Naive thymus-derived CD8-positive, alpha-beta T cell (primary cell): ENCODE measurements at regions of chr7 and their contacts with region 1.

Region 1: GRCh38 chr7:45111298-45112223 is at the start of gene TBRG4:
- DNase-seq: peak; percentile 90 to 96 (median 94)
- ATAC-seq: peak; percentile 80
- H3K4me3 Mint-ChIP-seq: peak within 1 kb of the TSS; percentile 93 to 100 (median 96)
- H3K27ac Mint-ChIP-seq: peak within 1 kb of the TSS; percentile 97 to 100 (median 99)
- H3K4me1 Mint-ChIP-seq: peaks cover 19 to 56% (median 49%) of the 10 kb centered on the region in 4 donors
- H3K27me3 Mint-ChIP-seq: no peaks in the 10 kb centered on the region
- polyA plus RNA-seq, gene TBRG4: 51.3 to 95.7 (median 69.0) TPM

Region 2: GRCh38 chr7:44973610-44974401 is 137.8 kb before region 1 on chr7:
- POLR2A ChIA-PET with region 1: interaction called, 21 read pairs
- DNase-seq: peak in 9 of 10 donors; percentile 43 to 80 (median 48)
- ATAC-seq: peak; percentile 26 to 28
- H3K4me3 Mint-ChIP-seq: peak overlapping the region in 1 of 10 donors; percentile 29
- H3K27ac Mint-ChIP-seq: peak overlapping the region in 9 of 10 donors; percentile 47 to 88 (median 77)
- H3K4me1 Mint-ChIP-seq: peaks cover 17 to 61% (median 49%) of the 10 kb centered on the region in 4 donors
- H3K27me3 Mint-ChIP-seq: no peaks in the 10 kb centered on the region

Region 3: GRCh38 chr7:44986218-44987053 is 125.1 kb before region 1 on chr7:
- POLR2A ChIA-PET with region 1: interaction called, 12 read pairs
- DNase-seq: peak; percentile 90 to 97 (median 94)
- ATAC-seq: peak; percentile 93 to 95
- H3K4me3 Mint-ChIP-seq: peak overlapping the region; percentile 93 to 99 (median 98)
- H3K27ac Mint-ChIP-seq: peak overlapping the region; percentile 95 to 100 (median 99)
- H3K4me1 Mint-ChIP-seq: peaks cover 27 to 61% (median 54%) of the 10 kb centered on the region in 4 donors
- H3K27me3 Mint-ChIP-seq: no peaks in the 10 kb centered on the region

Region 4: GRCh38 chr7:45026984-45027773 is 84.4 kb before region 1 on chr7:
- POLR2A ChIA-PET with region 1: interaction called, 33 read pairs
- DNase-seq: peak in 9 of 10 donors; percentile 12 to 78 (median 44)
- ATAC-seq: peak; percentile 64 to 66
- H3K4me3 Mint-ChIP-seq: peak overlapping the region; percentile 88 to 97 (median 93)
- H3K27ac Mint-ChIP-seq: peak overlapping the region; percentile 89 to 99 (median 92)
- H3K4me1 Mint-ChIP-seq: peaks cover 21 to 72% (median 60%) of the 10 kb centered on the region in 4 donors
- H3K27me3 Mint-ChIP-seq: no peaks in the 10 kb centered on the region

Region 5: DNA sequence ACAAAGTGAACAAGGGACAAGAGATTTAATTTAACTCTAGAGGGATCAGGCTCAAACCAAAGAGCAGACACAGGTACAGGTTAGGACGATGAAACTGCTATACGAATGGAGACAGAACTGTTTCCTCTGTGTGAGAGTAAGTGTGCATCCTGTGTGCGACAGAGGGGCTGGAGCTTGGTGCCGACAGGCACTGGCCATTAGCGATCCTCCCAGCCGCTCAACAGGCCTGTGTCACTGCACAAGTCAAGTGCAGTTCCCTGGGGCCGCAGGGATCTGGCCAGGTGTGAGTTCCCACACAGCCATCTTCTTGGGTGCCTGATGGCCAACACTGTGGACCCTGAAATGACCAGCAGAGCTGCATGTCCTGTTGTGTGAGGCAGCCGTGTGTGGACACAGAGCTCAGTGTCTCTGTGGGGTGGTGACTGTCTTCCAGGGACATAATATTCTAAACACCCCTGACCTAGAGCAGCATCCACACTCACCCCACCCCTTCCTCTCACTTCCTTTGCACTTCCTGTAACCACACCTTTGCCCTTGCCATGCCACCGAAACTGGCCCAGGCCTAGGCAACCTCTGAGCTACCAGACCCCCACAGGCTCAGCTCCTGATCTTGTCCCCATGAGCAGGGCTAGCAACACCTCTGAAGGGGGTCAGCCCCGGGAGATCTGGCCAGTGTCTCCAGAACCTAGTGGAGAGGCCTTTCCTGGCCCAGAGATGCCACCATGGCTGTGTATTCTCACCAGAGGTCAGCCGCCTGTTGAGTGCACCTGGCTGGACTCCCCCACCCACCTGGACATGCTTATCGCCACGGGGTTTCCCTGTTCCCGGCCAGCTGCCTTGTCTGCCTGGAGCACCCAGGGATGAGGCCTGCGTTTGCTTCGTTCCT is 11.7 kb after region 1 on chr7:
- POLR2A ChIA-PET with region 1: interaction called, 38 read pairs
- DNase-seq: no peak
- ATAC-seq: peak in 1 of 2 donors; percentile 30
- H3K4me3 Mint-ChIP-seq: peak overlapping the region in 6 of 10 donors; percentile 47 to 71 (median 62)
- H3K27ac Mint-ChIP-seq: peak overlapping the region; percentile 59 to 89 (median 84)
- H3K4me1 Mint-ChIP-seq: peaks cover 4 to 22% (median 18%) of the 10 kb centered on the region in 4 donors
- H3K27me3 Mint-ChIP-seq: peaks cover 0 to 8% (median 2%) of the 10 kb centered on the region in 5 donors